Activated T-helper 1 cell treated with anti-CD3 and anti-CD28 coated beads, Interleukin-12 subunit alpha, Interleukin-12 subunit beta, Interleukin-2, Interleukin-4 antibody, amounts not matched to agents 30 ng/mL and 10 ng/mL and 1 ng/mL, durations not matched to agents 14 hours and 24 hours and 36 hours (primary cell): ENCODE measurements at regions of chr19 and their contacts with region 1.

Region 1: DNA sequence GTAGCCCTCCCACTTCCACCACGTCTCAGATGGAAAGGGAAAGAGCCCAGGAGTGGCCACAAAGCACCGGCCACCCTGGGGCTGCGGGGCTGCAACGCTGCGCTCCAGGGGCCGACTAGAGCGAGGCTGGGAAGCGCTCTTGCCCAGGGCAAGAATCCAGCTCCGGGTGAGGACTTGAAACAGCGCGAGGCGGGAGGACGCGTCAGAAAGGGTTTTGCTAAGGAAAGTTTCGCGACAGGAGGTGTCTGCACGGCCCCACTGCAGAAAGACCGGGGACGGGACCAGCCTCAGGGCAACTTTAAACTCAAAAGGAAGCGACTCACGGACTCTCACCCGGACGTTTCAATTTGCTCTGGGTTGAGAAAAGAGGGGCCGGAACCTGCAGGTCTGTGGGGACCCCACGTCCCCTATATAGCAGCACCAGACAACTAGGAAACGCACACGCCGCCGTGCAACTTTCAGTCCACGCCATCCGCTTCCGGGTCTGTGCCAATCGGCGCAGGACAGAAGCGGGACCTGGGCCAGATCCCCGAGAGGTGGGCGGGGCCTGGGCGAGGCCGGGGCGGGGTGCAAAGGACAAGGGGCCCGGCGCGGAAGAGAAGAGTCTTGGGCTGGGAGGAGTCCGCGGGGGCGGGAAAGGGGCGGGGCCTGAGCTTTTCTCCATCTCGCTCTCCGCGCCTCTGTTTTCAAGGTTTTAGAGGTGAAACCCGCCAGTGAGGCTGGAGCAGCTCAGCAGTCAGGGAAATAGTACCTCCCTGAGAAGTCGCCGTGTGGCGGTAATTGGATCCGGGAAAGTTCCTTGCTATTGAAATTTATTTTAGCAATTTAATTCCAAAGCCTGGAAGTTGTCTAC is at the start of gene ZNF816:
- DNase-seq: peak; percentile 99
- H3K4me3 Mint-ChIP-seq: peak within 1 kb of the TSS; percentile 98
- H3K27ac Mint-ChIP-seq: peak within 1 kb of the TSS; percentile 93
- H3K4me1 Mint-ChIP-seq: peaks cover 25% of the 10 kb centered on the region
- H3K27me3 Mint-ChIP-seq: no peaks in the 10 kb centered on the region
- total RNA-seq, gene ZNF816: 7.0 and 9.4 TPM in 2 replicates

Region 2: DNA sequence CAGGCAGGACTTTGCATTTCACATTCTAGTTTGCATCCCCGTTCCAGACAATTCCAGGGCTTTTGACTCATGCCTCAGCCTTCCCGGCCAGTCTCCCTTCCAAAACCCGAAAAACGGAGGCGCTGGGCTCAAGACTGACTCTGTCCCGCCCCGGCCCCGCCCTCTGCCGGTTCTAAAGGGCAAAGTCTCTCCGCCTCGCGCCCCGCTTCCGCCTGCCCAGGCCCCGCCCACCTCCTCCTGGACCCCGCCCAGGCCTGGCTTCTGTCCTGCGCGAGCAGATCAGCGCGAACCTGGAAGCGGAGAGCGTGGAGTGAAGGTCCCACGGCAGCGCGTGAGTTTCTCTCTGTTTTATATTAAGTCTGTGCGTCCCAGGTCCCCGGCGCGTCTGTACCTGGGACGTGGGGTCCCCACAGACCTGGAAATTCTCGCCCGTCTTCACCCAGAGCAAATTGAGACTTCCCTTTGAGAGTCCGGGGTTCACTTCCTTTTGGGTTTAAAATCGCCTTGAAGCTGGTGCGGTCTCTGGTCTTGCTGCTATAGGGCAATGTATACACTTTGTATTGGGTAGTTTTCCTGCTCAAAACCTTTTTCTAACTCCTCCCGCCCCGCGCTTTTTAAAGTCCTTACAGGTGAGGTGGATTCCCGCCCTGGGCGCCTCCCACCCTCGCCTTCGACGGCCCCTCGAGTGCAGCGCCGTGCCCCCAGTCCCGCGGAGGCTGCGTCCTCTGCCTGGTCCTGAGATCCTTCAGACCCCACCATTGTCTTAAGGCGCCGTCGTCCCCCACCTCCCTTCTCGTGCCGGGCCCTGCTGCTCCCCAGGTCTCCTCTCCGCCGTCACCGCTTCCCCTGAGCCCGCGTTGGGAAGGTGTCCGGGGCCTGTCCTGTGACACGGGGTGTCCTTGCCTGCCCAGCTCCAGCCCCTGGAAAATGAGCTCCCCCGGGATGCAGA is 361.3 kb before region 1 on chr19:
- intact Hi-C with region 1: loop called (anchors 2 kb)
- DNase-seq: peak; percentile 89
- H3K4me3 Mint-ChIP-seq: peak overlapping the region; percentile 89
- H3K27ac Mint-ChIP-seq: peak overlapping the region; percentile 64
- H3K4me1 Mint-ChIP-seq: peaks cover 12% of the 10 kb centered on the region
- H3K27me3 Mint-ChIP-seq: no peaks in the 10 kb centered on the region

Region 3: DNA sequence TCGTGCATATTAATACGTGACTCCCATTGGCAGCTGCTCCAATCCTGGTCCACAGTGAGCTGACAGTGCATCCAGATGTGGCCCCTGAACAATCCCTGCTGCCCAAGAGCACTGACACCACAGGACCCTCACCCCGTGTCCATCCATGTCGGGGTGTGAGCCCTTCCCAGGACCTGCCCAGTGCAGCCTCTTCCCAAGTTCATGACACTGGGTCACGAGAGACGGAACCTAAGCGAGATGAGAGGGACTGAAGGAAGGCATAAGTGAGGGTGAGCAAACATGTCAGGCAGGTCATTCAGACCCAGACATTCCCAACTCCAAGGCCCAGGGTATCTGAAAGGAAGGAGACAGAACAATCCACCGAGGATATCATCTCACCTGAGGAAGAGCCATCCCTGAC is 108.7 kb before region 1 on chr19:
- intact Hi-C with region 1: loop called (anchors 1 kb)
- DNase-seq: no peak
- H3K4me3 Mint-ChIP-seq: no peak overlapping the region
- H3K27ac Mint-ChIP-seq: no peak overlapping the region
- H3K4me1 Mint-ChIP-seq: peaks cover 22% of the 10 kb centered on the region
- H3K27me3 Mint-ChIP-seq: no peaks in the 10 kb centered on the region

Region 4: GRCh38 chr19:52942386-52943133 is 20.1 kb before region 1 on chr19:
- intact Hi-C with region 1: loop called (anchors 1 kb)
- DNase-seq: peak; percentile 94
- H3K4me3 Mint-ChIP-seq: peak overlapping the region; percentile 89
- H3K27ac Mint-ChIP-seq: peak overlapping the region; percentile 88
- H3K4me1 Mint-ChIP-seq: peaks cover 27% of the 10 kb centered on the region
- H3K27me3 Mint-ChIP-seq: peaks cover 2% of the 10 kb centered on the region

Region 5: GRCh38 chr19:53365134-53365898 is 402.7 kb after region 1 on chr19 and contains the start of gene ZNF525:
- intact Hi-C with region 1: loop called (anchors 10 kb)
- DNase-seq: peak; percentile 93
- H3K4me3 Mint-ChIP-seq: peak within 1 kb of the TSS; percentile 93
- H3K27ac Mint-ChIP-seq: peak within 1 kb of the TSS; percentile 91
- H3K4me1 Mint-ChIP-seq: peaks cover 17% of the 10 kb centered on the region
- H3K27me3 Mint-ChIP-seq: no peaks in the 10 kb centered on the region
- total RNA-seq, gene ZNF525: 16.5 and 19.0 TPM in 2 replicates